Panc1 (cell line): ENCODE measurements at regions of chr5 and their contacts with region 1.

Region 1: DNA sequence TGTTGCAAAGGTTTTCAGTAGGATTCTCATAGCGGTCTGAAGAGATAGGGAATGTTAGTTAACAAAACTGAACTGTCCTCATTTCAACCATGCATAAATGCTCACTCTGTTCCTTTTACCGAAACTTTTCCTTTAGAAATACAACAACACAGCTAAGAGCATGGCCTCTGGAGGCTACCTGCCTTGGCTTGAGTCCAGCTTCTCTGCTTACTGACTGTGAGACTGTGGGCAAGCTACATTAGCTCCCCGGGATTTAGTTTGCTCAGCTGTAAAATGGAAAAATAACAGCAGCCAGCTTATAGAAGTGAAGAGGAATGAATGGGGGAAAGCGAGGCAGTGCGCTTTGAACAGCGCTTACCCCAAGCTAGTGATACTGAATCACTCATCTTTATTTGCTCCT is 507.9 kb upstream of the DAP start:
- DNase-seq: no peak
- ATAC-seq: no peak
- H3K4me3 ChIP-seq: no peak overlapping the region
- H3K27ac ChIP-seq: no peak overlapping the region
- H3K4me1 ChIP-seq: no peaks in the 10 kb centered on the region
- H3K27me3 ChIP-seq: peaks cover 4% of the 10 kb centered on the region; the same call in 1 of the 2 replicates
- CTCF ChIP-seq: no peak

Region 2: DNA sequence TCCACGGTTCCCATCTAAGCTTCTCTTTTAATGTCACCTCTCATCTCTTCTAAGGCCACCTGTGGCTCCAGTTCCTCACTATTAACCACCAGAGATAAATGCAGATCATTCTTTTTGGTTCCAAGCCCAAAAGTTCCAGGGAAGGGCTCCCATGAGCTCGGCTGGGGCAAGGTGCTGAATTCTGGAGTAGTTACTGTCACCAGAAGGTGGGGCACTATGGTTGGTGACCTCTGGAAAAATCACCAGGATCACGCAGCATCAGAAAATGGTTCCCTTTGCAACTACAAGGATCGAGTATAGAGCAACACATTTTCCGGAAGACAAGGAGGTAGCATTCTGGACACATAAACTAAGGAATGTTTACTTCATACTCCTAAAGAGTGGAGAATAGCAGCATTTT is 20.8 kb after region 1 on chr5:
- CTCF ChIA-PET with region 1: no interaction called
- POLR2A ChIA-PET with region 1: no interaction called
- in situ Hi-C with region 1: no loop called
- intact Hi-C with region 1: no loop called
- DNase-seq: no peak
- ATAC-seq: no peak
- H3K4me3 ChIP-seq: no peak overlapping the region
- H3K27ac ChIP-seq: no peak overlapping the region
- H3K4me1 ChIP-seq: no peaks in the 10 kb centered on the region
- H3K27me3 ChIP-seq: no peaks in the 10 kb centered on the region
- CTCF ChIP-seq: peak; percentile 21

Region 3: GRCh38 chr5:11494340-11494739 is 225.4 kb after region 1 on chr5:
- CTCF ChIA-PET with region 1: no interaction called
- POLR2A ChIA-PET with region 1: no interaction called
- in situ Hi-C with region 1: no loop called
- intact Hi-C with region 1: loop called (anchors 5 kb)
- DNase-seq: no peak
- ATAC-seq: no peak
- H3K4me3 ChIP-seq: no peak overlapping the region
- H3K27ac ChIP-seq: no peak overlapping the region
- H3K4me1 ChIP-seq: no peaks in the 10 kb centered on the region
- H3K27me3 ChIP-seq: no peaks in the 10 kb centered on the region
- CTCF ChIP-seq: peak; percentile 51; the same call in 1 of the 2 replicates

Region 4: GRCh38 chr5:12023614-12024241 is 754.8 kb after region 1 on chr5:
- CTCF ChIA-PET with region 1: no interaction called
- POLR2A ChIA-PET with region 1: no interaction called
- in situ Hi-C with region 1: no loop called
- intact Hi-C with region 1: loop called (anchors 5 kb)
- DNase-seq: peak; percentile 28
- ATAC-seq: no peak
- H3K4me3 ChIP-seq: no peak overlapping the region
- H3K27ac ChIP-seq: no peak overlapping the region
- H3K4me1 ChIP-seq: no peaks in the 10 kb centered on the region
- H3K27me3 ChIP-seq: no peaks in the 10 kb centered on the region
- CTCF ChIP-seq: peak; percentile 68; the same call in 1 of the 2 replicates